A673 (cell line): ENCODE measurements at regions of chr18 and their contacts with region 1.

Region 1: DNA sequence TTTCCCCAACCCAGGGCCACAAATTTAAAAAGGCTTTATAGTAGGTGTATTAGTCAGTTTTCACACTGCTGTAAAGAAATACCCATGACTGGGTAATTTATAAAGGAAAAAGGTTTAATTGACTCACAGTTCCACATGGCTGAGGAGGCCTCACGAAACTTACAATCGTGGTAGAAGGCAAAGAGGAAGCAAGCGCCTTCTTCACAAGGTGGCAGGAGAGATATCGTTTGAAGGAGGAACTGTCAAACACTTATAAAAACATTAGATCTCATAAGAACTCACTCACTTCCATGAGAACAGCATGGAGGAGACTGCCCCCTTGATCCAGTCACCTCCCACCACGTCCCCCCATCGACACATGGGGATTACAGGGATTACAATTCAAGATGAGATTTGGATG is 70.4 kb downstream of the FECH start:
- DNase-seq: no peak
- H3K4me3 ChIP-seq: no peak overlapping the region
- H3K27ac ChIP-seq: no peak overlapping the region
- H3K4me1 ChIP-seq: no peaks in the 10 kb centered on the region
- H3K27me3 ChIP-seq: peaks cover 5% of the 10 kb centered on the region
- CTCF ChIP-seq: no peak

Region 2: GRCh38 chr18:57251747-57252146 is 264.3 kb before region 1 on chr18:
- CTCF ChIA-PET with region 1: no interaction called
- POLR2A ChIA-PET with region 1: interaction called, 13 read pairs
- intact Hi-C with region 1: no loop called
- DNase-seq: no peak
- H3K4me3 ChIP-seq: no peak overlapping the region
- H3K27ac ChIP-seq: no peak overlapping the region
- H3K4me1 ChIP-seq: no peaks in the 10 kb centered on the region
- H3K27me3 ChIP-seq: peaks cover 59% of the 10 kb centered on the region
- CTCF ChIP-seq: no peak

Region 3: DNA sequence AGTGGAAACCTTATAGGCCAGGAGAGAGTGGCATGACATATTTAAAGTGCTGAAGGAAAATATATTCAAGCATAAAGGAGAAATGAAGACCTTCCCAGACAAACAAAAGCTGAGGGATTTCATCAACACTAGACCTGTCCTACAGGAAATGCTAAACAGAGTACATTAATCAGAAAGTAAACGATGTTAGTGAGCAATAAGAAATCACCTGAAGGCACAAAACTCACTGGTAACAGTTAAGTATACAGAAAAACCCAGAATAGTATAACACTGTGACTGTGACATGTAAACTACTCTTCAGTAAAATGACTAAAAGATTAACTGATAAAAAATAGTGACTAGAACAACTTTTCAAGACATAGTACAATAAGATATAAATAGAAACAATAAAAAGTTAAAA is 199.6 kb after region 1 on chr18:
- CTCF ChIA-PET with region 1: no interaction called
- POLR2A ChIA-PET with region 1: no interaction called
- intact Hi-C with region 1: no loop called
- DNase-seq: no peak
- H3K4me3 ChIP-seq: no peak overlapping the region
- H3K27ac ChIP-seq: no peak overlapping the region
- H3K4me1 ChIP-seq: peaks cover 11% of the 10 kb centered on the region
- H3K27me3 ChIP-seq: no peaks in the 10 kb centered on the region
- CTCF ChIP-seq: no peak